ENCODE measurements at regions of chr18 and their contacts with region 1.

Region 1: DNA sequence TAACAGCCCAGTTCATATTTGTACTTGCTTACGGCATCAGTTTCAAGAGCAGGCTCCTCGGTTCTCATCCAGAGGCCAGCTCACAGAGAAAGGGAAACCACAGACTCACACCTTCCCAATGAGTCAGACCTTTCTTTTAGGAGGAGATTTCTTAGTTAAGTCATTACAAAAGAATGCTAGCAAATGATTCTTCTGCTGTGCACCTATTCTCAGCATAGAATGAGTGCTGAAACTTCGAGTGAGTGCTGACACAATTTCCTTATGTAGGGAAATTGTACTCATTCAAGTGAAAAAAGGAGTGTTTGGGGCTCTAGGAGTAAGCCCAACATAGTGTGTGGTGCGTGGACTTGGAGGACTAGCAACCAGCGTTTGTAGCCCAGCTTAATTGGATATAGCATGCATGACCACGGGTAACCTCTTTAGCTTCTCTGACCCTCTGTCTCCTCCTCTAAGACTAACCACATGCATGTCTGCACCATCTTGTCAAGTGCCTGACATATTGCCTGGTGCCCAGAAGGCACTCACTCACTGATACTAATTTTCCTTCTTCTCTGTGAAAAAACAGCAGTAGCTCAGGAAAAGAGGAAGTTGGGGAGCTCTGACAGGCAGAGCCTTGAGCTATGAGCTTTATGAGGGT is 87.0 kb downstream of the ALPK2 start:
- DNase-seq: peak; percentile 41
- ATAC-seq: no peak
- H3K4me3 ChIP-seq: no peak overlapping the region
- H3K27ac ChIP-seq: no peak overlapping the region
- H3K4me1 ChIP-seq: peaks cover 92% of the 10 kb centered on the region
- H3K27me3 ChIP-seq: no peaks in the 10 kb centered on the region
- CTCF ChIP-seq: no peak
- EP300 ChIP-seq: no peak
- POLR2A ChIP-seq: no peak
- RAD21 ChIP-seq: no peak

Region 2: DNA sequence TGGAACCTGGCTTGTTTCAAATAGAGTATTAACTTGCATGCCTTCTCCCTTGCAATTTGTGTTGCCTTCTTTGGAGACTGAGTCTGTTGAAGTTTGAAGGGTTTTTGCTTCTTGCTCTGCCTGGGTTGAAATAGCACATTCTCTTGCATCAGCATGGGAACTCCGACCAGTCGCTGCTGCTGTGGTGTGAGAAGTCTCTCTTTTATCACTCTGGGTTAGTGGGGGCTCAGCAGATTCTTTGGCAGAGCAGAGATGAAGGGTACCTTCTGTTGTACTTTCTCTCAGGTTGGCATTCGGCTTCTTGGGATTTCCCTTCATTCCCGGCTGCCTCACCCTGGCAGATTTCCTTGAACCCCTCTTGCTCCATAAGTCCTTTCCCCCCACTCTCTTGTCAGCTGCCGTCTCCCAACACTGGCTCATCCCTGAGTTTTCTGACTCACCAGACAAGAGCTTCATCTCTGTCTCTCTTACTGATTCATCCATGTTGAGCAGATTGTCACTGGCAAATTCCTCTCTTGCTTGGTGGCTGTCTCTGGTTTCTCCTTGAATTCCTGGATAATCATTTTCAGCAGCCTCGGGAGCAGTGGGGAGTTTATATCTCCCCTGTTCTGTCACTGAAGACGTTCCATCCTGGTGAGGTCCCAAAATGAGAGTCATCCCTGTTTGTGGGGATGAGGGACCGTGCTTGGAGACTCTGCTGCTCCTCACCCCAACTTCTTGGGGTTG is 37.1 kb after region 1 on chr18:
- CTCF ChIA-PET with region 1: no interaction called
- POLR2A ChIA-PET with region 1: interaction called, 3 read pairs
- in situ Hi-C with region 1: no loop called
- intact Hi-C with region 1: loop called (anchors 5 kb)
- DNase-seq: peak; percentile 28
- ATAC-seq: peak; percentile 52
- H3K4me3 ChIP-seq: peak overlapping the region; percentile 57 to 66 (median 65)
- H3K27ac ChIP-seq: no peak overlapping the region
- H3K4me1 ChIP-seq: peaks cover 42% of the 10 kb centered on the region
- H3K27me3 ChIP-seq: no peaks in the 10 kb centered on the region
- CTCF ChIP-seq: no peak
- EP300 ChIP-seq: no peak
- POLR2A ChIP-seq: no peak
- RAD21 ChIP-seq: no peak

Region 3: GRCh38 chr18:58590839-58591238 is 48.9 kb after region 1 on chr18:
- CTCF ChIA-PET with region 1: no interaction called
- POLR2A ChIA-PET with region 1: interaction called, 4 read pairs
- in situ Hi-C with region 1: no loop called
- intact Hi-C with region 1: loop called (anchors 5 kb)
- DNase-seq: no peak
- ATAC-seq: peak; percentile 68
- H3K4me3 ChIP-seq: peak overlapping the region in 1 of 3 experiments; percentile 41; a peak in 2 of 6 replicates
- H3K27ac ChIP-seq: no peak overlapping the region
- H3K4me1 ChIP-seq: peaks cover 34% of the 10 kb centered on the region
- H3K27me3 ChIP-seq: peaks cover 4 to 17% of the 10 kb centered on the region in 2 experiments; a peak in 3 of 5 replicates
- CTCF ChIP-seq: no peak
- EP300 ChIP-seq: no peak
- POLR2A ChIP-seq: no peak
- RAD21 ChIP-seq: no peak

Measured in HepG2 (cell line).